SK-N-SH (cell line): ENCODE measurements at regions of chr14 and their contacts with region 1.

Region 1: GRCh38 chr14:77053046-77053841 is 24.7 kb upstream of the IRF2BPL start:
- DNase-seq: peak; percentile 93
- H3K4me3 ChIP-seq: no peak overlapping the region; a peak in 1 of 4 replicates
- H3K27ac ChIP-seq: peak overlapping the region; percentile 10 to 70; a peak in 3 of 4 replicates
- H3K4me1 ChIP-seq: peaks cover 8 to 24% of the 10 kb centered on the region in 2 experiments; a peak in 2 of 4 replicates
- H3K27me3 ChIP-seq: no peaks in the 10 kb centered on the region
- CTCF ChIP-seq: peak; percentile 98
- EP300 ChIP-seq: no peak; a peak in 2 of 4 replicates
- RAD21 ChIP-seq: peak; percentile 96

Region 2: GRCh38 chr14:76882651-76883050 is 170.6 kb before region 1 on chr14:
- CTCF ChIA-PET with region 1: interaction called, 82 read pairs
- POLR2A ChIA-PET with region 1: no interaction called
- DNase-seq: peak; percentile 59
- H3K4me3 ChIP-seq: no peak overlapping the region
- H3K27ac ChIP-seq: peak overlapping the region in 1 of 2 experiments; percentile 72; a peak in 1 of 4 replicates
- H3K4me1 ChIP-seq: peaks cover 0 to 24% of the 10 kb centered on the region in 2 experiments; a peak in 1 of 4 replicates
- H3K27me3 ChIP-seq: no peaks in the 10 kb centered on the region
- CTCF ChIP-seq: no peak
- EP300 ChIP-seq: no peak
- RAD21 ChIP-seq: peak; percentile 48

Region 3: DNA sequence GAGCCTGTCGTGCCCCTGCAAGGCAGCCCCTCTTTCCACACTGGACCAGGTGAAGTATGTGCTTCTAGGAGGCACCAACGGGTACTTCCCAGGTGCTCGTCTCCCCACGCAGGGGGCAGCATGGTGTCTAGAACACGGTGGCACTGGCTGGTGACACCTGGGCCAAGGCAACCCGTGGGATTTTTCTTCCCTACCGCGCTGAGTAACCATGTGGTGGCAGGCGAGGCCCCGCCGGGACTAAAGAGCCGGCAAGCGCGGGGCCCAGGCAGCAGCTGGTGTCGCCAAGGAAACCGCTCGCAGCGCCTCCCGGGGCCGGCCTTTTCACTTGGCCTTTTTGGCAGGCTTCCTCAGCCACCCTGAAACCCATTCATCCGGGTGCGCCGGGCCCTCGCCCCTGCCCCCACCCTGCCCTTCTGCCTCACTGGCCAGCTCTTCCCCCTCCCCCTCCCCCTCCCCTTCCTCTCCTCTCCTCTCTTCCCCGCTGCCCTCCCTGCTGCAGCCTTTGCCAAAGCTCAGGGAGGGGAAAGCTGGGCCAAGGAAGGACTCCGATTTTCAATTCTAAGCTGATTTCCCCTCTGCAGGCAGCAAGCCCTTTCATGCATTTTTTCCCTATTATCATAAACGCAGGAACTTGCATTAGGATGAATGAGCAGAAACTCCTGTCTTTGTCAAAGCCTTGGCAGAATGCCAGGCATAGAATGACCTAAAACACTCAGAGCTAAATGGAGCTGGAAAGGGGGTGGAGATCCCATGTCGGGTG is 106.0 kb before region 1 on chr14:
- CTCF ChIA-PET with region 1: interaction called, 19 read pairs
- POLR2A ChIA-PET with region 1: no interaction called
- DNase-seq: peak; percentile 90
- H3K4me3 ChIP-seq: peak overlapping the region; percentile 18 to 50
- H3K27ac ChIP-seq: peak overlapping the region; percentile 99
- H3K4me1 ChIP-seq: peaks cover 43 to 46% of the 10 kb centered on the region in 2 experiments
- H3K27me3 ChIP-seq: no peaks in the 10 kb centered on the region
- CTCF ChIP-seq: peak; percentile 52
- EP300 ChIP-seq: peak; percentile 47 to 49; a peak in 2 of 4 replicates
- RAD21 ChIP-seq: peak; percentile 73

Region 4: GRCh38 chr14:77028384-77029231 is 24.6 kb before region 1 on chr14 and contains the start of gene IRF2BPL:
- CTCF ChIA-PET with region 1: interaction called, 99 read pairs
- POLR2A ChIA-PET with region 1: interaction called, 7 read pairs
- DNase-seq: peak; percentile 97
- H3K4me3 ChIP-seq: peak within 1 kb of the TSS; percentile 77 to 84
- H3K27ac ChIP-seq: peak within 1 kb of the TSS; percentile 96 to 99
- H3K4me1 ChIP-seq: peaks cover 36 to 41% of the 10 kb centered on the region in 2 experiments
- H3K27me3 ChIP-seq: no peaks in the 10 kb centered on the region
- CTCF ChIP-seq: no peak
- EP300 ChIP-seq: peak; percentile 79; a peak in 3 of 4 replicates
- RAD21 ChIP-seq: peak; percentile 21
- polyA plus RNA-seq, gene IRF2BPL: 10.9 and 17.1 TPM in 2 replicates

Region 5: GRCh38 chr14:77067632-77068514 is 14.6 kb after region 1 on chr14:
- CTCF ChIA-PET with region 1: interaction called, 45 read pairs
- POLR2A ChIA-PET with region 1: no interaction called
- DNase-seq: peak; percentile 84
- H3K4me3 ChIP-seq: no peak overlapping the region; a peak in 1 of 4 replicates
- H3K27ac ChIP-seq: no peak overlapping the region
- H3K4me1 ChIP-seq: peaks cover 0 to 14% of the 10 kb centered on the region in 2 experiments; a peak in 2 of 4 replicates
- H3K27me3 ChIP-seq: no peaks in the 10 kb centered on the region
- CTCF ChIP-seq: peak; percentile 92
- EP300 ChIP-seq: no peak
- RAD21 ChIP-seq: peak; percentile 95

Region 6: GRCh38 chr14:77116172-77116817 is 63.1 kb after region 1 on chr14:
- CTCF ChIA-PET with region 1: no interaction called
- POLR2A ChIA-PET with region 1: no interaction called
- DNase-seq: no peak
- H3K4me3 ChIP-seq: no peak overlapping the region
- H3K27ac ChIP-seq: no peak overlapping the region
- H3K4me1 ChIP-seq: no peaks in the 10 kb centered on the region; a peak in 1 of 4 replicates
- H3K27me3 ChIP-seq: no peaks in the 10 kb centered on the region
- CTCF ChIP-seq: no peak
- EP300 ChIP-seq: no peak
- RAD21 ChIP-seq: no peak

Region 7: DNA sequence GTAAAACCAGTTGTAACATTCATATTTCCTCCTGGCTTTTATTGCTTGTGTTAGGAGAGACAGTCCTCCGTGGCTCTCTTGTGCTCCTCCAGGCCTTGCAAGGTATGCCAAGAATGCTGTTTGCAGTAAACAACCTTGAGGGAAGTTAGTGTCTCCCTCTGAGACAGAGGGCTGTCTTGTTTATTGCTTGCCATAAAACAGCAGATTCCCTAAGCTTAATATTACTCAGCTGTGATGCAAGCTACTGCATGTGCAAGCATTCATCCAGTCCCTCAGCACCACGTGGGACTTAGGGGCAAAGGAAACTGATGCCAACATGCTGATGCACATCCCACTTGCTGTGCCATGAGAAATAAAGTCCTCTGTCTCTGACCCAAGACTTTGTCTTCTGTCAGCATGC is 260.8 kb after region 1 on chr14:
- CTCF ChIA-PET with region 1: no interaction called
- POLR2A ChIA-PET with region 1: no interaction called
- DNase-seq: no peak
- H3K4me3 ChIP-seq: no peak overlapping the region
- H3K27ac ChIP-seq: peak overlapping the region in 1 of 2 experiments; percentile 36; a peak in 1 of 4 replicates
- H3K4me1 ChIP-seq: peaks cover 7 to 18% of the 10 kb centered on the region in 2 experiments; a peak in 3 of 4 replicates
- H3K27me3 ChIP-seq: no peaks in the 10 kb centered on the region
- CTCF ChIP-seq: no peak
- EP300 ChIP-seq: no peak
- RAD21 ChIP-seq: no peak